Activated CD8-positive, alpha-beta T cell treated with anti-CD3 and anti-CD28 coated beads, Interleukin-2, amount 10 ng/mL, durations not matched to agents 7 days and 5 days (primary cell): ENCODE measurements at regions of chr6 and their contacts with region 1.

Region 1: DNA sequence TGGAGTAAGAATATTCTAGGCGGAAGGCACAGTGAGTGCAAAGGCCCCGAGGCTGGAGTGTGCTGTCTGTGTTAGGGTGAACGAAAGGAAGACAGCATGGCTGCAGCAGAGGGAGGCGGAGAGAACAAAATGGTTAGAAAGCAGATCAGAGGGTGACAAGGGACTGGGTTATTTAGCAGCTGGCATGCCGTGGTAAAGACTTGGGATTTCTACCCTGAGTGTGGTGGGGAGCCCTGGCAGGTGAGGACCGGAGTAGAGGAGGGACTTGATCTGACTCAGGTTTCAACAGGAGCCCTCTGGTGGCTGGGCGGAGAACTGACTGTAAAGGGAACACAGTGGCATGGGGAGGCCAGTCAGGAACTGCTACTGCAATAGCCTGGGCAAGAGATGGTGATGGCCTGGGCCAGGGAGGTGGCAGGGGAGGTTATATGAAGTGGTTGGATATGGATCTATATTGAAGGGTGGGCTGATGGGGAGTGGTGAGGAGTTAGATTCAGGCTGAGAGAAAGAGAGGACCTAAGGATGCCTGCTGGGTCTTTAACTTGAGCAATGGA is 38.0 kb downstream of the PIM1 start:
- DNase-seq: peak; percentile 94
- ATAC-seq: peak; percentile 70
- H3K4me3 Mint-ChIP-seq: peak overlapping the region; percentile 45
- H3K27ac Mint-ChIP-seq: peak overlapping the region; percentile 87
- H3K4me1 Mint-ChIP-seq: peaks cover 79% of the 10 kb centered on the region
- H3K27me3 Mint-ChIP-seq: no peaks in the 10 kb centered on the region

Region 2: DNA sequence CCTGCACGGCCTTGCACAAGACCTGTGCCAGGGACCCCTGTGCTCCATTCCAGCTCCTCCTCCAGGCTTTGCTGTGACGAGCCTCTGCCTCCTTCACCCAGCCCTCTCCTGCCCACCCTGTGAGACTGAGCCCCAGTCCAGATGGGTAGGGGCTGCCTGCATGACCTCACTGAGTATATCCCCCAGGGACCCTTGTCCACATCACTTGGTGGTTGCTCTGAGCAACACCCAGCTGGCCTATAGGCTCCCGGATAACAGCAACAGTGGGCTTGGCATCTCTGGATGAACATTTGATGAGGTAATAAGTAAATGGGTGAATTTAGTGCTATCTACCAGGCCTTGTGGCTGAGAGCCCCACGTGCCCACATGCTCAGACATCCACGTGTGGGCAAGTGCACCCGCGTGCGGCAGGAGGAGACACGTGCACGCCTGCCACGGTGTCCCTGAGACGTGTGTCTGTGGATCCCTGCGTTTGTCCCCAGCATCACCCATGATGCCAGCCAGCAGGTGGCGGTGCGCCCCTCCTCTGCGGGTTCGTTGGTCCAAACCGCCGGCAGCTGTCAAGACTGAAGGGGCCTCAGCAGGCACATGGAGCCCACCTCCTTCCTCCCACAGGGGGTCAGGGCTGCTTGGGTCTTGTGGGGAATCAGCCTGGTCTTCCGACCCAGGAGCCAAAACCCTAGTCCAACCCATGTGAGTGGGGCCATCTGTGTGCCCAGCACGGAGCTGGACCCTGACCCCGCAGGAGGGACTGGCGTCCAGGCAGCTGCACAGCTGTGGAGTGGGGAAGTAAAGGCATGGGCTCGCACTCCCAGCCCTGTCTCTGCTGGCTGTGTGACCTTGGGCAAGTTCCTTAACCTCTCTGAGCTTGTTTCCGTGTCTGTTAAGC is 156.6 kb before region 1 on chr6:
- CTCF ChIA-PET with region 1: interaction called, 193 read pairs
- POLR2A ChIA-PET with region 1: interaction called, 84 read pairs
- DNase-seq: peak; percentile 95
- ATAC-seq: peak; percentile 62
- H3K4me3 Mint-ChIP-seq: peak overlapping the region; percentile 80
- H3K27ac Mint-ChIP-seq: peak overlapping the region; percentile 89
- H3K4me1 Mint-ChIP-seq: peaks cover 76% of the 10 kb centered on the region
- H3K27me3 Mint-ChIP-seq: no peaks in the 10 kb centered on the region

Region 3: DNA sequence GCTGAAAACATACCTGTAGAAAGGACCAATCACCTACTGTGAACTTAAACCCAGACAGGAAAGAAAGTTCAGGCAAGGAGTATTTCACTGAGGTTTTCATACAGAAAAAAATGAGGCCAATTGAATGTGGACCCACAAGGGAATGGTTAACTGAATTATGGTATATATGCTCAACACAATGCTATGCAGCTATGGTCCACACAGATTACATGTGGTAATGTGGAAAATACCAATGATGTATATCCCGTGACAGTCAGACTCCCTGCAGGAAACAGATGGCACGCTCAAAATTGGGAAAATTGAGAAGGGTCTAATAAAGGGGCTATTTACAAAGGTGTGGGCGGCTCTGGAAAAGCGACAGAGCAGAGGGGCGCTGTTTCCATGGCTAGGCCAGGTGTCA is 85.1 kb before region 1 on chr6:
- CTCF ChIA-PET with region 1: no interaction called
- POLR2A ChIA-PET with region 1: no interaction called
- DNase-seq: no peak
- ATAC-seq: no peak
- H3K4me3 Mint-ChIP-seq: no peak overlapping the region
- H3K27ac Mint-ChIP-seq: no peak overlapping the region
- H3K4me1 Mint-ChIP-seq: peaks cover 4% of the 10 kb centered on the region
- H3K27me3 Mint-ChIP-seq: peaks cover 10% of the 10 kb centered on the region

Region 4: GRCh38 chr6:37182736-37183590 is 25.0 kb before region 1 on chr6:
- CTCF ChIA-PET with region 1: interaction called, 148 read pairs
- POLR2A ChIA-PET with region 1: interaction called, 351 read pairs
- DNase-seq: peak; percentile 89
- ATAC-seq: peak; percentile 95
- H3K4me3 Mint-ChIP-seq: peak overlapping the region; percentile 36
- H3K27ac Mint-ChIP-seq: peak overlapping the region; percentile 96
- H3K4me1 Mint-ChIP-seq: peaks cover 73% of the 10 kb centered on the region
- H3K27me3 Mint-ChIP-seq: no peaks in the 10 kb centered on the region

Region 5: DNA sequence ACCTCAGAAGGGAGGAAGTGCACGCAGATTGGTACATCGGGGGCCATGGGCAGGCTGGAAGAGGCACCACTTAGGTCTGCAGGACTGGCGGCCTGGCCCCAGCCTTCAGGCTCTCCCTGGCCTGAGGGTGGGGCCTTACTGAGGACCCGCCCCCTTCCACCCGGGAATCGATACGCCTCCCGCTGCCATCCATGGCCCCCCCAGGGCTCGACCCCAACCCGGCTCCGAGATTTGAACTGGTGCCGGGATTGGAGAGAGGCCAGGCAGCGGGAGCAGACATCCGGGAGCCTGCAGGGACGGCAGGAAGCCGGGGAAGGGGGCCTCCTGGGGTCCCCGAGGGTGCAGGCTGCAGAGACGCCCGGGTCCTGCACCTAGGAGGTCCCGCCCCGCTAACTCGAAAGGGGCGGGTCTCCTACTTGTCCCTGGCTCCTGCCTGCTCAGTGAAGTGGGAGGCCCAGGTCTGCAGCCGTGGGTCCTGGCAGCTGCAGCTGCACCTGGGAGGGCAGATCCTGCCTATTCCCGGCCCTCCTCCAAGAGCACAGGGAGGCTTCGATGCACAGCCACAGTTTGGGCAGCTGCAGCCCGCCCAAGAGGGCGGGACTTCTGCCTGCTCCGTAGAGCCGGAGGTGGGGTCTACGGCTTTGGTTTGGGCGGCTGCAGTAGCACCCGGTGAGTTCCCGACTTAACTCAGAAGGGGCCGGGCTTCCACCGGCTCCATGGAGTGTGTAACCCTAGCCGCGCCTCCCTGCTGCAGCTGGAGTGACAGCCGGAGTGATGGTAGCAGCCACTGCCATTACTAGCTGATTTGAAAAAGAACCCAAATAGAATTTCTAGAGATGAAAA is 14.4 kb after region 1 on chr6:
- CTCF ChIA-PET with region 1: interaction called, 48 read pairs
- POLR2A ChIA-PET with region 1: no interaction called
- DNase-seq: peak; percentile 86
- ATAC-seq: peak; percentile 97
- H3K4me3 Mint-ChIP-seq: peak overlapping the region; percentile 81
- H3K27ac Mint-ChIP-seq: peak overlapping the region; percentile 65
- H3K4me1 Mint-ChIP-seq: peaks cover 38% of the 10 kb centered on the region
- H3K27me3 Mint-ChIP-seq: no peaks in the 10 kb centered on the region